Activated CD4-positive, alpha-beta memory T cell treated with anti-CD3 and anti-CD28 coated beads, Interleukin-2, amount 10 ng/mL, durations not matched to agents 7 days and 5 days (primary cell): ENCODE measurements at regions of chr12 and their contacts with region 1.

Region 1: DNA sequence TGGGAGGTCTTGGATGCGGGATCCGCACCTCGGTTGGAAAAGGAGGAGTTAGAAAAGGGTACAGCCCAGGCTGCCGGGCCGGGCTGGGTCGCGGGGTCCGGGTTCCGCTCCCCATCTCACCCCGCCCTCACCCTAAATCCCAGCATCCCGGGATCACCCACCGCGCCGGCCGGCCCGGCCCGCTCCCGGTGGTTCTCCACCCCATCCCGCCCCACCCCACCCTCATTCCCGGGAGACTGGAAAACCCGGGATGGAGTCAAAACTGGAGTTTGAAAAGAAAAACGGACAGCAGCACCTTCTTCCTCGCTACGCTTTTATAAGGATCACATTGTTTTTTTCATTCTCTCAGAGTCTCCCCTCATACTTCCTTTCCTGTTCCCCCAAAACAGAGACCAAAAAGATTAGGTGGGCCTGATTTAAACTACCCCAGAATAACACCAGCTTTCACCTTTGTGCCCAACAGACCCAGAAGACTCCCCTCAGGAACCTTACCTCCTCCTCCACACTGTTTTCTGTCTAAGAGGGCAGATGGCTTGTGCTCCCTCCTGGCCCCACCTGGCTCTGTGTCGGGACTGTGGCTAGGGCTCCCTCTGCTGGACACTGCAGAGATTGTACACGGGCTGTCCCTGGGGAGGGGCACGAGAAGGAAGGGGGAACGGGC is 2.8 kb downstream of the GLI1 start:
- DNase-seq: peak; percentile 90
- H3K4me3 Mint-ChIP-seq: peak overlapping the region; percentile 85
- H3K27ac Mint-ChIP-seq: peak overlapping the region; percentile 38
- H3K4me1 Mint-ChIP-seq: peaks cover 57% of the 10 kb centered on the region
- H3K27me3 Mint-ChIP-seq: peaks cover 23% of the 10 kb centered on the region

Region 2: DNA sequence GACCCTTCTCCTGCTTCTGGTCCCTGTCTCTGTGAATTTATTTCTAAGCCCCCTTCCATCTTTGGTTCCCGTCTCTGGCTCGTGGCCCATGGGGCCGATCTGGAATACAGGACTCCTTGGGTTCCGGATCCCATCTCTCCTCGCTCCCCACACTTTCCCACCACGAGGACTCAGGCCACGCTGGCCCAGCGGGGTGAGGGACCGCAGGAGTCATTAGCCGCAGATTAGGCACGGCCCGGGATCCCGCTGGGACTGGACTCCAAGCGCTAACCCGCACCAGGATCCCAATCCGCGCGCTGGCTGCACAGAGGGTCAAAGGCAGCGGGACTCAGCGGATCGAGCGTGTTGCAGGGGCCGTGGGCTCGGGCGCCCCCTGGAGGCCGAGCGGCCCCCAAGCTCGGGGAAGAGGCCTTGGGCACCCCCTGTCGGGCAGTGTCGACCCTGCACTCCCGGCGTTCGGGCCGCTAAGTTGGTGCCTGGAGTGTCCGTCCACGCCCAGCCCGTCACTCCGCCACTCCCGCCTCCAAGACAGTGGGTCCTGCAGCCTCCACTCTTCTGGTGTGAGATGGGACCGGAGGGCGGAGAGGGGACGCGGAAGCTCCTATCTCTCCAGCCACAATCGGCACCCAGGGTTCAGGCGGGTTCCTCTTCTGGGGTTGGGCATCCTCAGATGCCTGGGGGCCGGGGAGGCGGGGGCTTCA is 223.4 kb before region 1 on chr12:
- CTCF ChIA-PET with region 1: interaction called, 11 read pairs
- POLR2A ChIA-PET with region 1: no interaction called
- DNase-seq: peak; percentile 92
- H3K4me3 Mint-ChIP-seq: peak overlapping the region; percentile 95
- H3K27ac Mint-ChIP-seq: peak overlapping the region; percentile 83
- H3K4me1 Mint-ChIP-seq: peaks cover 79% of the 10 kb centered on the region
- H3K27me3 Mint-ChIP-seq: peaks cover 48% of the 10 kb centered on the region

Region 3: DNA sequence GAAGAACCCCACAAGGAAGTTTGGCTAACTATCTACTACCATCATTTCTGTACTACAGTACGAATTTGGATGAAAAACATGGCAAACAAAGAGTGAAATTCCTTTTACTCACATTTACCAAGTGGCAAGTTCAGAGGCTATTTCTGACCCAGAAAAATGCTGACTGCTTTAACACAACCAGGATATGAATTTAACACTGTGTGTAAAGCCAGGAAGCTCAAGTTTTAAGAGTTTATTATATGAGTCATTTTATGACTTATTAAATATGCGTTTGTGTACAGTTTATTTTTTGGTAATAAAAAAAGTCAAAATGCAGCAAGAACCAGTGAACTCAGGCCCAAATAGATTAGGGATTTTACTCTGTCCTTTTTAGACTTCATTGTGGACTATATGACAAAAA is 153.0 kb before region 1 on chr12:
- CTCF ChIA-PET with region 1: interaction called, 40 read pairs
- POLR2A ChIA-PET with region 1: interaction called, 4 read pairs
- DNase-seq: no peak
- H3K4me3 Mint-ChIP-seq: no peak overlapping the region
- H3K27ac Mint-ChIP-seq: no peak overlapping the region
- H3K4me1 Mint-ChIP-seq: peaks cover 10% of the 10 kb centered on the region
- H3K27me3 Mint-ChIP-seq: no peaks in the 10 kb centered on the region

Region 4: DNA sequence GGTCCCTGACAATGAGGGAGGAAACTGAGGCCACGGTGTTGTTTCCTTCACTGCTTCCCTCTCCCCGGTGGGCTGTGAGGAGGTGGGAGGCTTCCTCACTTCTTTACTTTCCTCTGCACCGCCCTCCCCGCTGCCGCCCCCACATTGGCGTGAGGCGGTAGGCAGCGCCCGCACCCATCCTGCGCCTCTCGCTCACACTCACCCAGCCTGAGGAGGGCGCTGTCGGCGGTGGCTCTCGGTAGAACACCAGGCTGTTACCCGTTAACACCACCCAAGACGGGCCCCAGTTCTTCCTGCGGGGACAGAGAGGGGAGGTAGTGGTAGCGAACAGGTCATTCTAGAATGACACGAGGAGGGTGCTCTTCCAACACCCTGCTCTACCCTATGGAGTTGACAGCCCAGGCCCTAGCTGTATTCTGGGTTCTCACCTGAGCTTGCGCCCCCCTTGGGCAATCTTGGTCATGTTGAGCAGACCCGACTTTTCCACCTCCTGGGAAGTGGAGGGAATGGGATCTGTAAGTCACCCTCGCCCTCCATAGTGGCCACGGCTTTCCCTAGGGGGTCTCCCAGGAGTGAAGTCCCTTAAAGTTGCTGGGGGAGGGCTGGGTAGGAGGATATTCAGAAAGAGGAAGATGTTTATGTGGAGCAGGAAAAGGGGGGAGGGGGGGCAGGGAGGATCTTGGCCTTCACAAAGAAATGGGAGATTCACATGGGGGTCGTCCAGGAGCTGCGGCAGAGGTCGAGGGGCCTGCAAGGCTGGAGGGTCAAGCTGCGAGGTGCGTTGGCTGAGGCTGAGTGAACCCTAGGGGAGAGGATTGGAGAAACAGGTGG is 14.0 kb after region 1 on chr12:
- CTCF ChIA-PET with region 1: interaction called, 204 read pairs
- POLR2A ChIA-PET with region 1: interaction called, 72 read pairs
- DNase-seq: peak; percentile 86
- H3K4me3 Mint-ChIP-seq: peak overlapping the region; percentile 89
- H3K27ac Mint-ChIP-seq: peak overlapping the region; percentile 100
- H3K4me1 Mint-ChIP-seq: peaks cover 57% of the 10 kb centered on the region
- H3K27me3 Mint-ChIP-seq: no peaks in the 10 kb centered on the region

Region 5: GRCh38 chr12:57520053-57520871 is 57.9 kb after region 1 on chr12 and contains the start of gene DDIT3:
- CTCF ChIA-PET with region 1: interaction called, 7 read pairs
- POLR2A ChIA-PET with region 1: interaction called, 14 read pairs
- DNase-seq: peak; percentile 100
- H3K4me3 Mint-ChIP-seq: peak within 1 kb of the TSS; percentile 82
- H3K27ac Mint-ChIP-seq: peak within 1 kb of the TSS; percentile 100
- H3K4me1 Mint-ChIP-seq: peaks cover 59% of the 10 kb centered on the region
- H3K27me3 Mint-ChIP-seq: no peaks in the 10 kb centered on the region
- total RNA-seq, gene DDIT3: 19.1 to 22.7 TPM

Region 6: GRCh38 chr12:57571926-57572762 is 109.8 kb after region 1 on chr12:
- CTCF ChIA-PET with region 1: no interaction called
- POLR2A ChIA-PET with region 1: no interaction called
- DNase-seq: no peak
- H3K4me3 Mint-ChIP-seq: no peak overlapping the region
- H3K27ac Mint-ChIP-seq: no peak overlapping the region
- H3K4me1 Mint-ChIP-seq: no peaks in the 10 kb centered on the region
- H3K27me3 Mint-ChIP-seq: no peaks in the 10 kb centered on the region

Region 7: DNA sequence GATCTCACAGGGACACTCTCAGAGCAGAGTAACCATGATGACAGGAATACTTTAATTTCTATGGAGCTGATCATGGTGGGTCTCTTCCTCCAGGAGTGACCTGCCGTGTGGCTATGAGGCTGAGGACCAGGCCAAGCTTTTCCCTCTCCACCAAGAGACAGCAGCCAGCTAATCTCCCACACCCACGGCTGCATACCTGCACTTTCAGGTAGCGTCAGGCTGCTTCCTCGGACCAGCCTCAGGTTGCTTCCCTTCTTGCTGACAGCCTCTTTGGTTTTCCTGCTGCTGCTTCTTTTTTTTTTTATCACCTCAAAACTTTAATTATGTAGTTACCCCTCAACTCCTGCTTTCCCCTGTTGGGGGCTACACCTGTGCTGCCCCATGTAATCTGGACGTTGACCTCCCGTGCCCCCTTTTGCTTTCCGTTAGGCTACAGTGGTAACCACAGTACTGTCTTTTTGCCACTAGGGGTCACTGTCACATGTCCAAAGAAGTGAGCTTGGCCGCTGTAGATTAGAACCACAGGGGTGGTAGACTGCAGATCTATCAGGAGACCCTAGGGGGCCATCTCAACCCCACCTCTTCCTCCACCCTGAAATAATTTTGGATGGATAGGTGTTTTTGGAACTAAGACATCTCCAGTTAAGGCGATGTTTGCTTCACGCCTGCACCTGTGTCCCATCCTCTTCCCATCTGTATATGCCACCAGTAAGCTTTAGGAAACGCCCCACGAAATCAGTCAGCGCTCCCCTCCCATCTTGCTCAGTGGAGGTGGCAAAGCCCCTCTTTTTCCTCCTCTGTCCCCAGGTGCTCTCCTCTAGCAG is 120.8 kb after region 1 on chr12:
- CTCF ChIA-PET with region 1: interaction called, 14 read pairs
- POLR2A ChIA-PET with region 1: no interaction called
- DNase-seq: peak; percentile 72
- H3K4me3 Mint-ChIP-seq: no peak overlapping the region
- H3K27ac Mint-ChIP-seq: no peak overlapping the region
- H3K4me1 Mint-ChIP-seq: peaks cover 5% of the 10 kb centered on the region
- H3K27me3 Mint-ChIP-seq: peaks cover 1% of the 10 kb centered on the region